B cell (primary cell): ENCODE measurements at regions of chr13 and their contacts with region 1.

Region 1: DNA sequence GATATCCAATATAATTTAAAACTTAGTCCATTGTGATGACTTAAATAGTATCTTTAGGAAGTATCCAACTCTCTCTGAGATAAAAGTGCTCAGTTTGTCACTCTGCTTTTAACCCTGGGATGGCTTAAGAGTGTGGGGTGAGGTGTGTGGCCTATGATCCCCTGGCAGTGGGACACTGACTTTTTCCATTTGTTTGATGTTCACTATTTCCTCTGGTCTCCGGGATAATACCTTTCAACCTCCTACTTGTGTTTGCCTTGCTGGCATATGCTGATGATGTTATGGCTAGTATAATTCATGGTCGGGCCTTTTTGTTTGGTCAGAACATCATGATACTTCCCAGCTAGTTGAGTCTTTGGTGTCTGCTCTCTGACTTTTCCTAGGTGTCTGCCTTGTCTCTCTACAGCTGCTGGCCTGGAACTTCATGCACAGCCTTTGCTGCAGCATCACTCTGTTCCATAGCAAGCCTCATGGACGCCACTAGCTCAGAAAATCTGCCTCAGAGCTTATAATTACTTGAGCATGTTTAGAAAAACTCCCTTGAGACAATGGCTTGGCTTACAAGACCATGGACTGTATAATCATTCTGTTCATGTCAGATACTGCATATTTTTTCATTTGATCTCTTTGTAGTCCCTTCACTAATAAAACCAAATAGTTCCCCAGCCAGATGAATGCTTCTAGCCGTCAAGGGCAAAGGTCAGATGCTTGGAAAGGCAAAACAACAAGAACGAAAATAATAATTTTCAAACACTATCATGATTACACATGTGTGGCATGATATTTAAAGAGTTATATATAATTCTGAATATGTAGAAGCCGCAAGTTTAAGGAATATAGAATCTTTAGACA is 75.2 kb downstream of the WDFY2 start:
- DNase-seq: no peak
- ATAC-seq: no peak
- H3K4me3 ChIP-seq: no peak overlapping the region
- H3K4me3 Mint-ChIP-seq: no peak overlapping the region
- H3K27ac ChIP-seq: no peak overlapping the region
- H3K27ac Mint-ChIP-seq: no peak overlapping the region
- H3K4me1 ChIP-seq: peaks cover 7 to 10% of the 10 kb centered on the region in 2 donors
- H3K4me1 Mint-ChIP-seq: peaks cover 23% of the 10 kb centered on the region
- H3K27me3 ChIP-seq: no peaks in the 10 kb centered on the region
- H3K27me3 Mint-ChIP-seq: no peaks in the 10 kb centered on the region
- CTCF ChIP-seq: no peak

Region 2: GRCh38 chr13:51619614-51620013 is 39.9 kb before region 1 on chr13:
- CTCF ChIA-PET with region 1: no interaction called
- POLR2A ChIA-PET with region 1: no interaction called
- intact Hi-C with region 1: loop called (anchors 5 kb)
- DNase-seq: no peak
- ATAC-seq: no peak
- H3K4me3 ChIP-seq: no peak overlapping the region
- H3K4me3 Mint-ChIP-seq: no peak overlapping the region
- H3K27ac ChIP-seq: no peak overlapping the region
- H3K27ac Mint-ChIP-seq: no peak overlapping the region
- H3K4me1 ChIP-seq: peaks cover 7 to 8% of the 10 kb centered on the region in 2 donors
- H3K4me1 Mint-ChIP-seq: peaks cover 21% of the 10 kb centered on the region
- H3K27me3 ChIP-seq: no peaks in the 10 kb centered on the region
- H3K27me3 Mint-ChIP-seq: no peaks in the 10 kb centered on the region
- CTCF ChIP-seq: no peak

Region 3: GRCh38 chr13:51632591-51633362 is 26.7 kb before region 1 on chr13:
- CTCF ChIA-PET with region 1: no interaction called
- POLR2A ChIA-PET with region 1: no interaction called
- intact Hi-C with region 1: no loop called
- DNase-seq: no peak
- ATAC-seq: no peak
- H3K4me3 ChIP-seq: no peak overlapping the region
- H3K4me3 Mint-ChIP-seq: no peak overlapping the region
- H3K27ac ChIP-seq: no peak overlapping the region
- H3K27ac Mint-ChIP-seq: no peak overlapping the region
- H3K4me1 ChIP-seq: peaks cover 17 to 20% of the 10 kb centered on the region in 2 donors
- H3K4me1 Mint-ChIP-seq: peaks cover 52% of the 10 kb centered on the region
- H3K27me3 ChIP-seq: no peaks in the 10 kb centered on the region
- H3K27me3 Mint-ChIP-seq: no peaks in the 10 kb centered on the region
- CTCF ChIP-seq: no peak

Region 4: GRCh38 chr13:51645154-51645650 is 14.3 kb before region 1 on chr13:
- CTCF ChIA-PET with region 1: interaction called, 3 read pairs
- POLR2A ChIA-PET with region 1: no interaction called
- intact Hi-C with region 1: loop called (anchors 2 kb)
- DNase-seq: peak; percentile 79
- ATAC-seq: peak; percentile 79
- H3K4me3 ChIP-seq: peak overlapping the region in 2 of 5 experiments; percentile 16 to 42
- H3K4me3 Mint-ChIP-seq: peak overlapping the region; percentile 70
- H3K27ac ChIP-seq: peak overlapping the region; percentile 83 to 91
- H3K27ac Mint-ChIP-seq: peak overlapping the region; percentile 88
- H3K4me1 ChIP-seq: peaks cover 39 to 42% of the 10 kb centered on the region in 2 donors
- H3K4me1 Mint-ChIP-seq: peaks cover 60% of the 10 kb centered on the region
- H3K27me3 ChIP-seq: no peaks in the 10 kb centered on the region
- H3K27me3 Mint-ChIP-seq: no peaks in the 10 kb centered on the region
- CTCF ChIP-seq: no peak